AG04450 (cell line): ENCODE measurements at regions of chr12 and their contacts with region 1.

Region 1: GRCh38 chr12:96516472-96517430 is 27.4 kb downstream of the CFAP54 start:
- DNase-seq: peak; percentile 65
- H3K4me3 ChIP-seq: no peak overlapping the region
- H3K27ac ChIP-seq: no peak overlapping the region
- H3K27me3 ChIP-seq: no peaks in the 10 kb centered on the region
- CTCF ChIP-seq: peak; percentile 53

Region 2: GRCh38 chr12:95918194-95918993 is 598.4 kb before region 1 on chr12:
- CTCF ChIA-PET with region 1: interaction called, 10 read pairs
- POLR2A ChIA-PET with region 1: interaction called, 3 read pairs
- DNase-seq: no peak
- H3K4me3 ChIP-seq: no peak overlapping the region
- H3K27ac ChIP-seq: no peak overlapping the region
- H3K27me3 ChIP-seq: peaks cover 11% of the 10 kb centered on the region
- CTCF ChIP-seq: peak; percentile 91

Region 3: DNA sequence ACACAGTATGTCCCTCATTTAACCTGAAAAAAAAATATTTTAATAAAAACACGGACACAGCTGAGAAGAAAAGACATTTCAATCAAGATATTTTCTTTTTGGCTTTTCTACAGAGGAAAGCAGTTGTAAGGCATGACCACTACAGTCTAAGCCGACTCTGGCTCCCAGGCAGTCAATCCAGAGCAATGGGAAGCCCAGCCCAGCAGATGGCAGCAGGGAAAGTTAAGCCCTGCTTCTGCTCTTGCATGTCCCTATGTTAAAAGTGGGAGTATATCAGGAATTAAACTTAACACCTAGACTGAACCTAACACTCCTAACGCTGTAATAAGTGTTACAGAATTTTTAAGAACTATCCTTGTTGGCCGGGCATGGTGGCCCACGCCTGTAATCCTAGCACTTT is 501.1 kb before region 1 on chr12:
- CTCF ChIA-PET with region 1: interaction called, 41 read pairs
- POLR2A ChIA-PET with region 1: no interaction called
- DNase-seq: no peak
- H3K4me3 ChIP-seq: no peak overlapping the region
- H3K27ac ChIP-seq: no peak overlapping the region
- H3K27me3 ChIP-seq: no peaks in the 10 kb centered on the region
- CTCF ChIP-seq: peak; percentile 56

Region 4: GRCh38 chr12:96208801-96209549 is 307.8 kb before region 1 on chr12:
- CTCF ChIA-PET with region 1: interaction called, 17 read pairs
- POLR2A ChIA-PET with region 1: no interaction called
- DNase-seq: no peak
- H3K4me3 ChIP-seq: no peak overlapping the region
- H3K27ac ChIP-seq: no peak overlapping the region
- H3K27me3 ChIP-seq: no peaks in the 10 kb centered on the region
- CTCF ChIP-seq: 0 out of 2 replicates have a peak, but pooled peaks have one; percentile 20

Region 5: GRCh38 chr12:96237465-96238077 is 279.2 kb before region 1 on chr12:
- CTCF ChIA-PET with region 1: interaction called, 11 read pairs
- POLR2A ChIA-PET with region 1: no interaction called
- DNase-seq: peak; percentile 81
- H3K4me3 ChIP-seq: peak overlapping the region; percentile 3; the same call in 1 of the 2 replicates
- H3K27ac ChIP-seq: peak overlapping the region; percentile 81
- H3K27me3 ChIP-seq: no peaks in the 10 kb centered on the region
- CTCF ChIP-seq: no peak

Region 6: GRCh38 chr12:96386794-96387193 is 130.0 kb before region 1 on chr12:
- CTCF ChIA-PET with region 1: interaction called, 12 read pairs
- POLR2A ChIA-PET with region 1: no interaction called
- DNase-seq: no peak
- H3K4me3 ChIP-seq: no peak overlapping the region
- H3K27ac ChIP-seq: no peak overlapping the region
- H3K27me3 ChIP-seq: no peaks in the 10 kb centered on the region
- CTCF ChIP-seq: no peak

Region 7: DNA sequence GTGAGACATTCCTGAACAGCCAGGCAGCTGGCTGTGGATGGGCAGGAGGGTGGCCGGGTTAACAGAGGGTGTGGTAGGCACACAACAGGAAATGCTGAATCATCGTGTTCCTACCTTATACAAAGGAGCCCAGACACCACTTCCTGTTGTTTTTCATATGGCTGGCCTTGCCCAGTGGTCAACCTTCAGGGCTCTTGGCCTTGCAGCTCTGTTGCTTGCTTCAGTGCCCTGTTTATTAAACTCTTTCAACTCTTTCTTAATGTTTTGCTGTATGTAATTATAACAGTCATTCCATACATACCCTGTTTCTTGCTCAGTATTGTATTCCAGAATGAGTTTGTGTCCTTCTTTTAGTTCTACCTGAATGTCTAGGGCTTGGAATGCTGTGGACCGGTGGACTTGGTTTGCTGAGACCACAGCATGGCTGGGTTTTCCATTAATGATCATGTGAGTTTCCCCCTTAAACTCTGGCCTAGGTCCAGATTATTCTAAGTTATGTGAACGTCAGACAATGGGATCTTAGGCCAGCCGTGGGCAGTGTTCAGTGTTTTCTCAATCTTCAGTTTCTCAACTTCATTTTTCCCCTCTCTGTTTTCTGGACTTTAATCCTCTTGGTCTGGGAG is 15.5 kb before region 1 on chr12:
- CTCF ChIA-PET with region 1: interaction called, 16 read pairs
- POLR2A ChIA-PET with region 1: interaction called, 3 read pairs
- DNase-seq: no peak
- H3K4me3 ChIP-seq: no peak overlapping the region
- H3K27ac ChIP-seq: peak overlapping the region; percentile 79
- H3K27me3 ChIP-seq: no peaks in the 10 kb centered on the region
- CTCF ChIP-seq: no peak

Region 8: GRCh38 chr12:96548384-96548783 is 31.6 kb after region 1 on chr12:
- CTCF ChIA-PET with region 1: no interaction called
- POLR2A ChIA-PET with region 1: no interaction called
- DNase-seq: no peak
- H3K4me3 ChIP-seq: no peak overlapping the region
- H3K27ac ChIP-seq: no peak overlapping the region
- H3K27me3 ChIP-seq: no peaks in the 10 kb centered on the region
- CTCF ChIP-seq: no peak